ENCODE measurements at regions of chr1 and their contacts with region 1.

Region 1: GRCh38 chr1:209989525-209989924 is 51.5 kb downstream of the SYT14 start:
- DNase-seq: peak in 1 of 2 donors; percentile 3
- H3K4me3 ChIP-seq: no peak overlapping the region
- H3K27ac ChIP-seq: no peak overlapping the region
- H3K4me1 ChIP-seq: no peaks in the 10 kb centered on the region
- H3K27me3 ChIP-seq: peaks cover 0 to 16% (median 3%) of the 10 kb centered on the region in 3 donors
- CTCF ChIP-seq: peak in 2 of 7 experiments; percentile 24 to 31
- EP300 ChIP-seq: no peak
- POLR2A ChIP-seq: no peak

Region 2: GRCh38 chr1:209860293-209860881 is 129.1 kb before region 1 on chr1:
- intact Hi-C with region 1: loop called (anchors 5 kb)
- DNase-seq: peak; percentile 79 to 93
- H3K4me3 ChIP-seq: no peak overlapping the region
- H3K27ac ChIP-seq: no peak overlapping the region
- H3K4me1 ChIP-seq: peaks cover 0 to 10% (median 6%) of the 10 kb centered on the region in 4 donors
- H3K27me3 ChIP-seq: no peaks in the 10 kb centered on the region
- CTCF ChIP-seq: peak in 5 of 7 experiments; percentile 63 to 87 (median 83)
- EP300 ChIP-seq: no peak
- POLR2A ChIP-seq: no peak

Region 3: DNA sequence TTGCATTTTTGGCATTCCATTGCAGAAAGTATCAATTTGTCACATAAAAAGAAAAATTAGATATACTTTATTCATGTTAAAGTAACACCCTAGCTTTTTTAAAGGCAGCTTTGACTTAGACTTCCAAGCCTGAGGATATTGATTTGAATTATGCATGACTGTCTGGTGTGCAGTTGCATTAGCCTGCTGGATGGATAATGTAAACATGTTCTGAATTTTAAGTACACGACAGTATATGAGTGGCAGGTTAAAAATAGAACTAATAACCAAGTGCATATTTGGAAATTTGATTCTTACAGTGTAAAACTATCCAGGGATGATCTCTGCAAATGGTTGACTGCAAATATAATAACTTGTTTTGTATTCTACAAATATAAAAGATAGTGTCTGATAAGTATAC is 72.5 kb after region 1 on chr1:
- intact Hi-C with region 1: no loop called
- DNase-seq: no peak
- H3K4me3 ChIP-seq: no peak overlapping the region
- H3K27ac ChIP-seq: no peak overlapping the region
- H3K4me1 ChIP-seq: no peaks in the 10 kb centered on the region
- H3K27me3 ChIP-seq: no peaks in the 10 kb centered on the region
- CTCF ChIP-seq: no peak
- EP300 ChIP-seq: no peak
- POLR2A ChIP-seq: no peak

Measured in stomach (tissue), 19 donors.